ENCODE measurements at regions of chr6 and their contacts with region 1.

Region 1: GRCh38 chr6:145734486-145735355 is 599 bp downstream of the EPM2A start:
- DNase-seq: peak; percentile 82
- ATAC-seq: peak; percentile 70
- H3K4me3 Mint-ChIP-seq: peak overlapping the region; percentile 88
- H3K27ac Mint-ChIP-seq: peak overlapping the region; percentile 95
- H3K4me1 Mint-ChIP-seq: peaks cover 24% of the 10 kb centered on the region
- H3K27me3 Mint-ChIP-seq: no peaks in the 10 kb centered on the region

Region 2: GRCh38 chr6:145963216-145964068 is 228.7 kb after region 1 on chr6:
- CTCF ChIA-PET with region 1: no interaction called
- POLR2A ChIA-PET with region 1: no interaction called
- intact Hi-C with region 1: loop called (anchors 1 to 2 kb)
- DNase-seq: peak; percentile 67
- ATAC-seq: peak; percentile 34
- H3K4me3 Mint-ChIP-seq: peak overlapping the region; percentile 94
- H3K27ac Mint-ChIP-seq: peak overlapping the region; percentile 88
- H3K4me1 Mint-ChIP-seq: peaks cover 44% of the 10 kb centered on the region
- H3K27me3 Mint-ChIP-seq: no peaks in the 10 kb centered on the region

Region 3: GRCh38 chr6:146357578-146358430 is 623.1 kb after region 1 on chr6:
- CTCF ChIA-PET with region 1: no interaction called
- POLR2A ChIA-PET with region 1: no interaction called
- intact Hi-C with region 1: loop called in 1 of 2 experiments (anchors 10 kb)
- DNase-seq: peak; percentile 12
- ATAC-seq: peak; percentile 86
- H3K4me3 Mint-ChIP-seq: no peak overlapping the region
- H3K27ac Mint-ChIP-seq: no peak overlapping the region
- H3K4me1 Mint-ChIP-seq: peaks cover 10% of the 10 kb centered on the region
- H3K27me3 Mint-ChIP-seq: peaks cover 12% of the 10 kb centered on the region